ENCODE measurements at regions of chr4 and their contacts with region 1.

Region 1: GRCh38 chr4:158722917-158723793 is at the start of gene PPID:
- DNase-seq: peak; percentile 74 to 89 (median 79)
- H3K4me3 ChIP-seq: peak within 1 kb of the TSS; percentile 83
- H3K27ac ChIP-seq: peak within 1 kb of the TSS; percentile 58 to 69
- H3K4me1 ChIP-seq: peaks cover 4% of the 10 kb centered on the region
- H3K27me3 ChIP-seq: no peaks in the 10 kb centered on the region
- CTCF ChIP-seq: no peak
- EP300 ChIP-seq: no peak
- POLR2A ChIP-seq: peak; percentile 57
- total RNA-seq, gene PPID: 10.9 to 18.2 (median 14.5) TPM

Region 2: GRCh38 chr4:158768555-158769174 is 45.5 kb after region 1 on chr4 and contains the start of gene FNIP2:
- intact Hi-C with region 1: loop called in 1 of 4 experiments (anchors 2 kb)
- DNase-seq: peak; percentile 80 to 91 (median 86)
- H3K4me3 ChIP-seq: peak within 1 kb of the TSS; percentile 89
- H3K27ac ChIP-seq: peak within 1 kb of the TSS; percentile 58 to 77
- H3K4me1 ChIP-seq: peaks cover 4% of the 10 kb centered on the region
- H3K27me3 ChIP-seq: no peaks in the 10 kb centered on the region
- CTCF ChIP-seq: no peak
- EP300 ChIP-seq: no peak
- POLR2A ChIP-seq: no peak
- total RNA-seq, gene FNIP2: 10.8 to 34.1 (median 20.9) TPM

Region 3: DNA sequence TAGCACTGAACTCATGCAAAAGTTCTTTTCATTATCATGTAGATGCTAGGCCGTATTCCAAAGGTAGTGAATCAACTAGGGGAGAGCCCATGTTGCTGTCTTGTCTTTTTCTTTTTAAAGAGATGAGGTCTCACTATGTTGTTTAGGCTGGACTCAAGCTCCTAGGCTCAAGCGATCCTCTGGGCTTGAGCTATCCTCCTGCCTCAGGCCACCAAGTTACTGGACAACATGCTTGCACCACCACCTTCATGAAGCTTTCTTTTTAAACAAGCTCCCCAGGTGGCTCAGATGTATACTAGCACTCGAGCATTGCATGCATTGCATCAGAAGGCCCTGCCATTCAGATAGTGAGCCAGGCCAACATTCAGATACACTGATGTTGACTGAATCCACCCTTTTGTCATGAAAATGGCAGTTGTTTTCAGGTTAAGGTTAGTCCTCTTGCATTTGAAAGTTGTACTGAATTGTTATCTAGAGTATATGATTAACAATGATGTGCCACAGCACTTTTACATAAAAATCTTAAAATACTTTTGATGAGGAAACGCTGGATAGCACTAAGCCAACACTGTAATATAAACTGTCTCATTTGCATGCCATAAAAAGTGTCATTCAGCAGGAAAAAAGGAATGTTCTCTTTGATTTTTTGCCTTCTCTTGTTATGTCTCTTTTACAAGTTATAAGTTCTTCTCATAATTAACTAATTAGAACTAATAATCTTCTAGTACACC is 122.3 kb after region 1 on chr4:
- intact Hi-C with region 1: loop called in 2 of 4 experiments (anchors 10 kb)
- DNase-seq: no peak
- H3K4me3 ChIP-seq: no peak overlapping the region
- H3K27ac ChIP-seq: no peak overlapping the region
- H3K4me1 ChIP-seq: no peaks in the 10 kb centered on the region
- H3K27me3 ChIP-seq: no peaks in the 10 kb centered on the region
- CTCF ChIP-seq: no peak
- EP300 ChIP-seq: no peak
- POLR2A ChIP-seq: no peak

Region 4: GRCh38 chr4:158856852-158857251 is 133.7 kb after region 1 on chr4:
- intact Hi-C with region 1: loop called in 2 of 4 experiments (anchors 5 to 10 kb)
- DNase-seq: no peak
- H3K4me3 ChIP-seq: no peak overlapping the region
- H3K27ac ChIP-seq: no peak overlapping the region
- H3K4me1 ChIP-seq: no peaks in the 10 kb centered on the region
- H3K27me3 ChIP-seq: no peaks in the 10 kb centered on the region
- CTCF ChIP-seq: peak; percentile 20 to 50 (median 35)
- EP300 ChIP-seq: no peak
- POLR2A ChIP-seq: no peak

Region 5: GRCh38 chr4:159175085-159175988 is 452.2 kb after region 1 on chr4:
- intact Hi-C with region 1: loop called in 1 of 4 experiments (anchors 10 kb)
- DNase-seq: peak; percentile 36 to 67 (median 45)
- H3K4me3 ChIP-seq: no peak overlapping the region
- H3K27ac ChIP-seq: no peak overlapping the region
- H3K4me1 ChIP-seq: peaks cover 9% of the 10 kb centered on the region
- H3K27me3 ChIP-seq: no peaks in the 10 kb centered on the region
- CTCF ChIP-seq: peak; percentile 41 to 73 (median 63)
- EP300 ChIP-seq: no peak
- POLR2A ChIP-seq: no peak

Region 6: DNA sequence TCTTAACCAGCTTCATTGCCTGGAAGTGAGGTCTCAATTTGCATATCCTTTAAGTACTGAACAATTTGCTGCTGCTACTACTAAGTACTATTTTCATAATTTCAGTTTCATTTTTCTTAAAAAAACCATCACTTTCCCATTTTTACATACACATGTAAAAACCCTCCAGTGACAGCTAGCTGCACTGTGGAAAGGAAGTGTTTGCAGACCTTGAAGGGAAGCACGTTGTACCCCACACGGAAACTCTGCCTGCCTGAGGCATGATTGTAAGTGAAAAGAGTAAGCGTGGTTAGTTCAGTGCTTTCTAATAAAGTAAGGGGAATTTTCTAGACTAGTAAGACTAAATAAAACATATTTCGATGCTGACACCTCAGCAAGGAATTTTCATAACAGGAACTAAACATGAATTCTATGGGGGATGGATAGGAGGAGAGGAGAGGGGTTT is 483.3 kb after region 1 on chr4:
- intact Hi-C with region 1: loop called in 2 of 4 experiments (anchors 10 kb)
- DNase-seq: no peak
- H3K4me3 ChIP-seq: no peak overlapping the region
- H3K27ac ChIP-seq: no peak overlapping the region
- H3K4me1 ChIP-seq: peaks cover 5% of the 10 kb centered on the region
- H3K27me3 ChIP-seq: no peaks in the 10 kb centered on the region
- CTCF ChIP-seq: no peak
- EP300 ChIP-seq: no peak
- POLR2A ChIP-seq: no peak

Measured in ovary (tissue), 10 donors.